GM10248 (cell line): ENCODE measurements at regions of chr11 and their contacts with region 1.

Region 1: GRCh38 chr11:61384271-61385242 is 7.8 kb upstream of the TMEM216 start:
- DNase-seq: no peak
- CTCF ChIP-seq: no peak

Region 2: GRCh38 chr11:61309739-61310138 is 74.8 kb before region 1 on chr11:
- CTCF ChIA-PET with region 1: interaction called, 23 read pairs
- POLR2A ChIA-PET with region 1: no interaction called
- DNase-seq: no peak
- CTCF ChIP-seq: no peak

Region 3: DNA sequence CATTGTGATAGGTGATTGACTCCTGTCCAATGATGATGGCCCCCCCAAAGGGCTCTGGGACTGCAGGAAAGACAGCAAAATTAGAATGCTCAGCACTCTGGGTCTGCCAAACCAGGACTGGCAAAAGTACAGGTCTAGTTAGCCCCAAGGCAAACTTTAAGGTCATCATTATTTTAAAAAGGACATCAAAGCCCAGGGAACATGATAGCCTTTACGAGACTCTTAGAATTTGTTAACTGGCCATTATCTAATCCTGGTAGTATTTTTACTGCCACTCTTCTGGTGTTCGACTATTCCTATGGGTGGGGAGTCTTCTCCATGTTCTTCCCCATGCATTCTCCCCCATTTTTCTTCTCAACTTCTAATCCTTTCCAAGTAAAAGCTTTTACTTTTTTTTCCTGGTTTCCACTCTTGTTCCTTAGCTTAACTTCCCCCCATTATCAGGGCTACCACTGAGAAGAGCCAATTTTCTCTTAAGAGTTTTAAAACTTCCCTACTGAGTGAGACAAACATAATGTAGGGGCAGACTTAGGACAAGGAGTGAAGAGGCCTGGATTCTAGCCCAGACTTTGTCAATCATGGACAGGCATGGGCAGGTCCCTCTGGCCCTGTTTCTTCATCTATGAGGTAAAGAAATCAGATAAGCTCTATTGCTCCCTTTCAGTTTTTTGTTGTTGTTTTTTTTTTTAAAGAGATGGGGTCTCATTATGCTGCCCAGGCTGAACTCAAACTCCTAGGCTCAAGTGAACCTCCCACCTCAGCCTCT is 58.7 kb before region 1 on chr11:
- CTCF ChIA-PET with region 1: interaction called, 48 read pairs
- POLR2A ChIA-PET with region 1: interaction called, 4 read pairs
- DNase-seq: no peak
- CTCF ChIP-seq: no peak

Region 4: DNA sequence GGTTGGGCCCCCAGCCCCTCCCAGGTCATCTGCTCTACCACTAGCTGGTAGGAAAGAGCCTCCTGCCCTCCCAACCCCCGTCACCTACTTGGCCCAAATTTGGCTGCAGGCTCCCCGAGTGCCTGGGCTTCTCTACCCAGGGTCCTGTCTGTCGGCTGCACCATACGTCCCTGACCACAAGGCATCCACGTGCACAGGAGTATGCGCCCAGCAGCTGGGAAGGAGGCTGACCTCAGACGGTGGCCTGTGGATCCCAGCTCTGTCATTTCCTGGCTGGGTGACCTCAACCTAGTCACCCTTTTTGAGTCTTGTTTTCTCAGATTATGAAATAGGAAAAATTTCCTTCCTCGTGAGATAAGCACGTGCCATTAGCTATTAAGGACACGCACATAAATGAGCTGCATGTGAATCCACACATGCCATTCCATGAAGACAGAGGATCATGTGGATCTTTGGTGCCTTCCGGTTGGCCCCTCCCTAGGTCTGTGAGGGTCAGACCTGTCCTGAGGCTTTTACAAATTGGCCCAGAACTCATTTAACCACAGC is 36.6 kb before region 1 on chr11:
- CTCF ChIA-PET with region 1: interaction called, 501 read pairs
- POLR2A ChIA-PET with region 1: interaction called, 12 read pairs
- DNase-seq: no peak
- CTCF ChIP-seq: no peak

Region 5: DNA sequence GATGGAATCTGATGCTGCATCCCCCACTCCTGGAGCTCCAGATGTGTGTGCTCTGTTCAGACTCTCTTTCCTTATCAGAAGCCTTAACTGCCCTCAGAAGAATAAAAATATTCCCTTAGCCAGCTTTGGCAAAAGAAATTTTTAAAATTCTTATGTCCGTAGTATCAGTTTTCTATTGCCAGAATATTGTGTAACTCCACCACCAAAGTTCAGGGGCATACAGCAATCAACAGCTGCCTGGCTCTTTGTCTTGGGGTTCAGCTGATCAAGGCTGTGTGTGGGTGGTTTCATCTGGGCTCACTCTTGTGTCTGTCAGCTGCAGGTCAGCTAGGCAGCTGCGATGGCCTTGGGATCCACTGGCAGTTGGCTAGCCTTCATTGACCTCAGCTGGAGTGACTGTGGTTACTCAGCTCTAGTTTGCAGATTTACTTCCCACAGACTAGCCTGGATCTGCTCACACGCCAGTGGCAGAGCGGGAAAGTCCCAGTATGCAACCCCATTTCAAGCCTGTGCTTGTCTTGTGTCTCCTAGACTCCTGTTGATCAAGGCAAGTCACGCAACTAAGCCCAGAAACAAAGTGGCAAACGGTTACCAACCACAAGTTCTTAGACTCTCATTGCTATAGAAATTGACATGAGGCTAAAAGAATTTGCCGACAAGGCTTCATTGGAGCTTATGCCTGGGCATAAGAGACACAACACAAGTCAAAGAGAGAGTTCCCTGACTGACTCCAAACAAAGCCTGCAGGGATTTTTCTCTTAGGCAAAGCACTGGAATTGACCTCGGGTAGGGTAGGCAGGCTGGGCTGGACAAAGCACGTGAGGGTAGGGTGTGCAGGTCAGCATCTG is 15.0 kb before region 1 on chr11:
- CTCF ChIA-PET with region 1: interaction called, 112 read pairs
- POLR2A ChIA-PET with region 1: interaction called, 4 read pairs
- DNase-seq: peak; percentile 34
- CTCF ChIP-seq: no peak

Region 6: GRCh38 chr11:61460474-61460881 is 75.9 kb after region 1 on chr11:
- CTCF ChIA-PET with region 1: no interaction called
- POLR2A ChIA-PET with region 1: no interaction called
- DNase-seq: no peak
- CTCF ChIP-seq: no peak